CD8-positive, alpha-beta memory T cell (primary cell): ENCODE measurements at regions of chr3 and their contacts with region 1.

Region 1: GRCh38 chr3:27659279-27660021 is 62.7 kb downstream of the EOMES start:
- DNase-seq: peak; percentile 20 to 68 (median 27)
- H3K4me3 ChIP-seq: no peak overlapping the region
- H3K4me3 Mint-ChIP-seq: no peak overlapping the region
- H3K27ac ChIP-seq: no peak overlapping the region
- H3K27ac Mint-ChIP-seq: peak overlapping the region in 1 of 8 donors; percentile 8
- H3K4me1 ChIP-seq: no peaks in the 10 kb centered on the region
- H3K4me1 Mint-ChIP-seq: peaks cover 0 to 13% (median 3%) of the 10 kb centered on the region in 3 donors
- H3K27me3 ChIP-seq: no peaks in the 10 kb centered on the region
- H3K27me3 Mint-ChIP-seq: peaks cover 5 to 7% of the 10 kb centered on the region in 2 donors

Region 2: DNA sequence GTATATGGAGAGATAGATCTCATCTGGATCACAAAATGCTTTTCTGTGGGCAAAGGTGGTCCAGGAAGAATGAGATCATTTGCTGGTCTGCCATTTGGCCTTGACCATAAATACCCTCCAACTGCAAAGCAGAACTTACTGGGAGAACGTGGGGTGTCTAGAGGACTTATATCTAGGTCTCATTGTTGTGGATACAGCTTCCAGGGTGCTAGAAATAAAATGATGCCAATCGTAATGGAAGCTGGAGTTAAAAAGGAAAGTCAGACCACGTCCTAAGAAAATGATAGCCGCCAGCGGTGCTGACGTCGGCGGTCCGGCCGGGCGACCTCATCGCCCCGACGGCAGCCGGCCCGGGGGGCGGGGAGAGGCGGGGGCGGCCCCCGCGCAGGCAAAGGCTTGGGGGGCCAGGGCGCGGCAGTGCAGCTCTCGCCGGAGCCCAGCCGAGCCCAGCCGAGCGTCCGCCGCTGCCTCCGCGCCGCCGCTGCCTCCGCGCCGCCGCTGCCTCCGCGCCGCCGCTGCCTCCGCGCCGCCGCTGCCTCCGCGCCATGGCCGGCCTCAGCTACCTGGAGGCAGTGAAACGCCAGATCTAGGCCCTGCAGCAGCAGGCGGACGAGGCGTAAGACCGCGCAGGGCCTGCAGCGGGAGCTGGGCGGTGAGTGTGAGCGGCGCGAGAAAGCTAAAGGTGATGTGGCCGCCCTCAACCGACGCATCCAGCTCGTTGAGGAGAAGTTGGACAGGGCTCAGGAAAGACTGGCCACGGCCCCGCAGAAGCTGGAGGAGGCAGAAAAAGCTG is 26.8 kb before region 1 on chr3:
- CTCF ChIA-PET with region 1: interaction called, 10 read pairs
- POLR2A ChIA-PET with region 1: no interaction called
- DNase-seq: peak; percentile 20 to 60 (median 46)
- H3K4me3 ChIP-seq: peak overlapping the region; percentile 74
- H3K4me3 Mint-ChIP-seq: peak overlapping the region; percentile 89 to 96 (median 96)
- H3K27ac ChIP-seq: peak overlapping the region; percentile 78
- H3K27ac Mint-ChIP-seq: peak overlapping the region; percentile 92 to 98 (median 94)
- H3K4me1 ChIP-seq: peaks cover 13% of the 10 kb centered on the region
- H3K4me1 Mint-ChIP-seq: peaks cover 31 to 52% (median 52%) of the 10 kb centered on the region in 3 donors
- H3K27me3 ChIP-seq: no peaks in the 10 kb centered on the region
- H3K27me3 Mint-ChIP-seq: peaks cover 0 to 3% of the 10 kb centered on the region in 2 donors

Region 3: GRCh38 chr3:27813255-27813654 is 153.8 kb after region 1 on chr3:
- CTCF ChIA-PET with region 1: no interaction called
- POLR2A ChIA-PET with region 1: no interaction called
- DNase-seq: no peak
- H3K4me3 ChIP-seq: no peak overlapping the region
- H3K4me3 Mint-ChIP-seq: no peak overlapping the region
- H3K27ac ChIP-seq: no peak overlapping the region
- H3K27ac Mint-ChIP-seq: no peak overlapping the region
- H3K4me1 ChIP-seq: no peaks in the 10 kb centered on the region
- H3K4me1 Mint-ChIP-seq: no peaks in the 10 kb centered on the region
- H3K27me3 ChIP-seq: no peaks in the 10 kb centered on the region
- H3K27me3 Mint-ChIP-seq: no peaks in the 10 kb centered on the region

Region 4: DNA sequence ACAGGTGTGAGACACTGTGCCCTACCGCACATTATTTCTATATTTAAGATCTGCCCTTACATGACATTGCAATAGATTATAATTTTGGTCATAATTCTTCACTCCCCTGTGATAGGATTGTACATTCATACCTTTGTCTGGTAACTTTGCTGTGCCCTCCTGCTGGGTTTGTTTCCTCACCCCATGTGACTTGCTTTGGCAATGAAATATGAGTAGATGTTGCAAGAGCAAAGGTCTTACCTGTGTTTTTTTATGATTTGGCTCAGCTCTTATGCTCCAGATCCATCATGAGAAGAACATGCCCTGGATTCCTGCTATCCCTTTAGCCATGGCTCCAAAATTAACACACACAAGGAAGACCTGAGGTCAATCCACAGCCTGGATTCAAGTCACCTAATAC is 200.4 kb after region 1 on chr3:
- CTCF ChIA-PET with region 1: no interaction called
- POLR2A ChIA-PET with region 1: no interaction called
- DNase-seq: no peak
- H3K4me3 ChIP-seq: no peak overlapping the region
- H3K4me3 Mint-ChIP-seq: peak overlapping the region in 2 of 7 donors; percentile 19 to 54
- H3K27ac ChIP-seq: no peak overlapping the region
- H3K27ac Mint-ChIP-seq: peak overlapping the region in 1 of 8 donors; percentile 61
- H3K4me1 ChIP-seq: peaks cover 40% of the 10 kb centered on the region
- H3K4me1 Mint-ChIP-seq: peaks cover 56 to 70% (median 61%) of the 10 kb centered on the region in 3 donors
- H3K27me3 ChIP-seq: no peaks in the 10 kb centered on the region
- H3K27me3 Mint-ChIP-seq: no peaks in the 10 kb centered on the region